ENCODE measurements at regions of chr5 and their contacts with region 1.

Region 1: DNA sequence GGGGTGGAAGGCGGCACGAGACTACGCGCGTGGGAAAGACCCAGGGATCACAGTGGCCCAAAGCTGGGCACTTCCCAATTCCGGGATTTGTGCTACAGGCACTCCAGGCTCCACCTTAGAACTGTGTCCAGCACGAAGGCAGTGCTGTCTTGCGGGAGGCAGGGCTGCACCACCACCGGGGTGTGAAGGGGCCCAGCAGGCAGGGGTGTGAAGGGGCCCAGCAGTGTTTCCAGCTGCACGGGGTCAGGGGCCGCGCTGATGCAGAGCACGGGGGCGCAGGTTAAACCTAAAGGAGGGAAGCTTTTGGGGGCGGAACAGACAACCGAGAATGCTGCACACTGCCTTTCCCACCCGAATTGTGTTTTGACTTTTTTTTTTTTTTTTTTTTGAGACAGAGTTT is 1.1 kb upstream of the PDCD6 start:
- DNase-seq: no peak
- H3K4me3 ChIP-seq: no peak overlapping the region
- H3K4me3 Mint-ChIP-seq: peak overlapping the region; percentile 65 to 97 (median 85)
- H3K27ac ChIP-seq: no peak overlapping the region
- H3K27ac Mint-ChIP-seq: peak overlapping the region; percentile 65 to 91 (median 83)
- H3K4me1 ChIP-seq: peaks cover 35% of the 10 kb centered on the region
- H3K4me1 Mint-ChIP-seq: peaks cover 17 to 45% (median 36%) of the 10 kb centered on the region in 4 donors
- H3K27me3 ChIP-seq: no peaks in the 10 kb centered on the region
- H3K27me3 Mint-ChIP-seq: no peaks in the 10 kb centered on the region

Region 2: DNA sequence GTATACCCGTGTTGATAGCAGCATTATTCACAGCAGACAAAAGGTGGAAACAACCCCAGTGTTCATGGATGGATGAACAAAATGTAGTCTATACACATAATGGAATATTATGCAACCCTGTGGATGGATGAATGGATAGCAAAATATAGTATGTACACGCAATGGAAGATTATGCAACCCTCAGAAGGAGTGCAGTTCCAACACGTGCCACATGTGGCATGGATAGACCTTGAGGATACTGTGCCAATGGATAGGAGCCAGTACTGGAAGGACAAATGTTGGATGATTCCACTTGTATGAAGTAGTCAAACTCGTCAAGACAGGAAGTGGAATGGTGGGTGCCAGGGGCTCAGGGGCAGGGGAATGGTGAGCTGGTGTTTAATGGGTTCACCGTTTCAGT is 133.4 kb before region 1 on chr5:
- CTCF ChIA-PET with region 1: no interaction called
- POLR2A ChIA-PET with region 1: no interaction called
- intact Hi-C with region 1: no loop called
- DNase-seq: no peak
- H3K4me3 ChIP-seq: no peak overlapping the region
- H3K4me3 Mint-ChIP-seq: no peak overlapping the region
- H3K27ac ChIP-seq: no peak overlapping the region
- H3K27ac Mint-ChIP-seq: no peak overlapping the region
- H3K4me1 ChIP-seq: no peaks in the 10 kb centered on the region
- H3K4me1 Mint-ChIP-seq: no peaks in the 10 kb centered on the region
- H3K27me3 ChIP-seq: no peaks in the 10 kb centered on the region
- H3K27me3 Mint-ChIP-seq: peaks cover 2 to 11% of the 10 kb centered on the region in 2 donors

Region 3: GRCh38 chr5:247551-248249 is 22.6 kb before region 1 on chr5:
- CTCF ChIA-PET with region 1: no interaction called
- POLR2A ChIA-PET with region 1: no interaction called
- intact Hi-C with region 1: no loop called
- DNase-seq: no peak
- H3K4me3 ChIP-seq: no peak overlapping the region
- H3K4me3 Mint-ChIP-seq: no peak overlapping the region
- H3K27ac ChIP-seq: no peak overlapping the region
- H3K27ac Mint-ChIP-seq: no peak overlapping the region
- H3K4me1 ChIP-seq: peaks cover 8% of the 10 kb centered on the region
- H3K4me1 Mint-ChIP-seq: peaks cover 11 to 33% (median 23%) of the 10 kb centered on the region in 4 donors
- H3K27me3 ChIP-seq: no peaks in the 10 kb centered on the region
- H3K27me3 Mint-ChIP-seq: no peaks in the 10 kb centered on the region

Region 4: DNA sequence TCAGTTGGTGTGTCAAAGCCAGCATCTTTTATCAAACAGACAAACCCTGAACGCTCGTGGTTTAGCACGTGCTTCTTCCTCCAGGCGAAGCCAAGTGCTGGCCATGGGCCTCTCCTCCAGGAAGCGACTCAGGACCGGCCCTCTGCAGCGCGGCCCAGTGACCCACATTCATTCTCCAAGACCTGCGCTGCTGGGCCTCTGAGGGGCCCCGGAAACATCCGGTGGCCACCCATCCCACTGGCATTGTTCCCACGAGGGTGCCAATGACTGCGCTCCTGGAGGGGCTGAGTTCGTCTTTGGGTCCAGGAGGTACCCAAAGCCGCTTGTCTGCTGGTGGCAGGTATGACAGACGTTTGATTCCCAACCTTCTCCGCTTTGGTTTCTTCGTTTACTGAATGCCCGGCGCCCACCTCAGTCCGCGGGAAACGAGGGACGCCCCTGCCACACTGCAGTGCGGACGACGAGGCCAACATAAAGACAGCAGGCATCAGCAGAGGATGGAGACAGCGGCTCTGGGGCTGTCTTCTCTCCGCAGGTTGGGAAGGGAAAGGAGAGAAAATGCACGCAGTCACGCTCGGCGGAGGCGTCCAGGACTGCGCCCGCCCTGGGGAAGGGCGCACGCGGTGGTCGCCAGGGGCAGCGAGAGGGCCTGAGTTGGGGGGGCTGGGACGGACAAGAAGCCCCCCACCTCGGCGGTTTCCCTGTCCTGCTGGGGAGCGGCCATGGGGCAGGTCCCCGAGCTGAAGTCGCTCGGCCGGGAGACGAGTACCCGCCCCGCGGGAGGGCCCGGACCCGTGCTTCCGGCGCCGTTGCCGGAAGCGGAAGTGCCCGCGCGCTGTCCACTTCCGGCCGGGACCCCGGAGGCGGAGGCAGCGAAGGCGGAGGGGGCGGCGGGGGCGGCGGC is 172.2 kb after region 1 on chr5 and contains the start of gene EXOC3:
- CTCF ChIA-PET with region 1: no interaction called
- POLR2A ChIA-PET with region 1: interaction called, 5 read pairs
- intact Hi-C with region 1: loop called (anchors 5 kb)
- DNase-seq: peak; percentile 62 to 77 (median 69)
- H3K4me3 ChIP-seq: peak within 1 kb of the TSS; percentile 92 to 95
- H3K4me3 Mint-ChIP-seq: peak within 1 kb of the TSS; percentile 94 to 99 (median 96)
- H3K27ac ChIP-seq: peak within 1 kb of the TSS; percentile 77
- H3K27ac Mint-ChIP-seq: peak within 1 kb of the TSS; percentile 91 to 97 (median 95)
- H3K4me1 ChIP-seq: peaks cover 34% of the 10 kb centered on the region
- H3K4me1 Mint-ChIP-seq: peaks cover 17 to 42% (median 34%) of the 10 kb centered on the region in 4 donors
- H3K27me3 ChIP-seq: no peaks in the 10 kb centered on the region
- H3K27me3 Mint-ChIP-seq: no peaks in the 10 kb centered on the region
- total RNA-seq, gene EXOC3: 83.0 to 96.1 TPM

Region 5: DNA sequence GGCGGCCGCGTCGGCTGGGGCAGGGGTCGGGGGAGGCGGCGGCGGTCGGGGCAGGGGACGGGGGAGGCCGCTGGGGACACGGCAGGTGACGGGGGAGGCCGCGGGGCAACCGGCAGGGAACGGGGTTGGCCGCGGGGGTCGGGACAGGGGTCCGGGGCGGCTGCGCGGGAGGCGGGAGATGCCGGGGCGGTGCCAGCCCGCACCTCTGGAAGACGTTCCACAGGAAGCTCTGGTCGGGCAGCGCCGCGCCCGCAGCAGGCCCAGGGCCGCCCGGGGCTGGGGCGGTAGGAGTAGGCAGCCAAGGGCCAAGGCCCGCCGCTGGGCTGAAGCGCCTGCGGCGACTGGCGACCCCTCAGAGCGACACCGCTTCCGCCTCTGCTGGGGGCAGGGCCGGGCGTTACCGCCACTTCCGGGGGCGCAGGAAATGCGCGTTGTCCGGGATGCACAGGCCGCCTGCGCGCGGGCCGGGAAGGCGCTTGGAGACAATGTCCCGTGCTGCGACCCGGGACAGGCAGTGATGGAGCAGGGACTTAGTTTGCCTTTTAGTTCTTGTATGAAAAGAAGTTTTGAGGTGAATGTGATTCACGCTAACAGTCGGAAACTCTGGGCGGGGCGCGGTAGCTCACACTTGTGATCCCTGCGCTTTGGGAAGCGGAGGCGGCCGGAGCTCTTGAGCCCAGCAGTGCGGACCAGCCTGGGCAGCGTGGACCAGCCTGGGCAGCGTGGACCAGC is 1363.4 kb after region 1 on chr5:
- CTCF ChIA-PET with region 1: no interaction called
- POLR2A ChIA-PET with region 1: no interaction called
- intact Hi-C with region 1: loop called (anchors 5 kb)
- DNase-seq: peak; percentile 54 to 69 (median 64)
- H3K4me3 ChIP-seq: peak overlapping the region; percentile 58 to 65
- H3K4me3 Mint-ChIP-seq: peak overlapping the region; percentile 90 to 96 (median 94)
- H3K27ac ChIP-seq: peak overlapping the region; percentile 56
- H3K27ac Mint-ChIP-seq: peak overlapping the region; percentile 72 to 96 (median 92)
- H3K4me1 ChIP-seq: peaks cover 8% of the 10 kb centered on the region
- H3K4me1 Mint-ChIP-seq: peaks cover 16 to 41% (median 27%) of the 10 kb centered on the region in 4 donors
- H3K27me3 ChIP-seq: no peaks in the 10 kb centered on the region
- H3K27me3 Mint-ChIP-seq: no peaks in the 10 kb centered on the region

Measured in CD4-positive, alpha-beta memory T cell (primary cell).